GM18951 (cell line): ENCODE measurements at regions of chr6 and their contacts with region 1.

Region 1: DNA sequence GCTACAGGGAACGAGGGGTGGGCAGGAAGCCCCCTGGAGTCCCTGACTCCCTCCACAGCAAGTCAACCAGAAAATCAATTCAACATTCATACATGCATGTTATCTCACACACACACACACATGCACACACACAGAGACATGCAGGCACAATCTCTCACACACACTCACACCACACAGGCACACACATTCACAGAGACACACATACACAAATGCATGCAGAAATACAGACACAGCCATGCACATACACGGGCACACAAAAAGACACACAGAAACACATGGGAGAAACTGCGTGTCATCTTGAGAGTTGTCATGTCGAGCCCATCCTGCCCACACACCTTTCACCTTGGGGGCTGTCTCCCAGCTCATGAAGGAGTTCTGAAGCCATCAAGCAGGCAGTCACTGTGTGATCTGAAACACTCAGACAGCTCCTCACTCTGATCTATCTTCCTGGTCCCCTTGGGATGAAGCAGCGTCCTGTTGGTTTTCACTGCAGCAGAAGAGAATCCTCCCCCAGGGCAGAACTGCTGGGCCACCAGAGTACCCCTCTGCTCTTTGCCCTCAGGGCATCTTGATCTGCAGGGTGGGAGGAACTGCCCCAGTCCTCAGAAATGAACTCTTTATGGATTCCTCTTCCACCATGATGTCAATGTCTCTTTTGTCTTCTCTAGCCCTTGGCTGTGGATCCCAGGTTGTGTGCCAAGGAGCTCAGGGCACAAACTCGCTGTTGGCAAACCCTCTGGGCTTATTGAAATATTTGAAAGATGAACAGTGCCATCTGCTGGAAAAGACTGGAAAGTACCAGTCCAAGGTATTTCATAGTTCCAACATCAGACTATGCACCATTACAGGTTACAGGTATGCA is 8.8 kb downstream of the RAET1L start:
- POLR2A ChIP-seq: no peak

Region 2: DNA sequence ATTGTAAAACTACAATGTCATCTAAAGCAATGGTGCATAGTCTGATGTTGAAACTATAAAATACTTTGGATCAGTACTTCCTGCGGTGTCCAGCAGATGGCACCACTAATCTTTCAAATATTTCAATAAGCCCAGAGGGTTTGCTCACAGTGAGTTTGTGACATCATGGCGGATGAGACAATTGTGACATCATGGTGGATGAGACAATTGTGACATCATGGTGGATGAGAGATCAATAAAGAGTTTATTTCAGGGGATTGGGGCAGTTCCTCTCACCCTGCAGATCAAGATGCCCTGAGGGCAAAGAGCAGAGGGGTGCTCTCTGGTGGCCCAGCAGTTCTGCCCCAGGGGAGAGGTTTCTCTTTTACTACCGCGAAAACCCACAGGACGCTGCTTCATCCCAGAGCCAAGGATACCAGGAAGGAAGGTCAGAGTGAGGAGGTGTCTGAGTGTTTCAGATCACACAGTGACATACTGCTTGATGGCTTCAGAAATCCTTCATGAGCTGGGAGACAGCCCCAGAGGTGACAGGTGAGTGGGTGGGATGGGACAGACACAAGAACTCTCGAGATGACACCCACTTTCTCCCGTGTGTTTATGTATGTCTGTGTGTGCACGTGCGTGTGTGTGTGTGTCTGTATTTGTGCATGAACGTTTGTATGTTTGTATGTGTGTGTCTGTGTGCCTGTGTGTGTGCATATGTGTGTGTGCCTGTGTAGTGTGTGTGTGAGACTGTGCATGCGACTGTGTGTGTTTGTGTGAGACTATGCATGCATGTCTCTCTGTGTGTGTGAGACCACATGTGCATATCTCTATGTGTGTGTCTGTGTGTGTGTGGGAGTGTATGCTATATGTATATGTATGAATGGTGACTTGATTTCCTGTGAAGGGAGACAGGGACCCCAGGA is 82.1 kb before region 1 on chr6:
- in situ Hi-C with region 1: loop called (anchors 5 kb)
- POLR2A ChIP-seq: no peak